GM10248 (cell line): ENCODE measurements at regions of chr6 and their contacts with region 1.

Region 1: GRCh38 chr6:41367700-41368099 is 32.3 kb downstream of the NCR2 start:
- DNase-seq: peak; percentile 32
- CTCF ChIP-seq: peak; percentile 50

Region 2: GRCh38 chr6:41072676-41073623 is 294.8 kb before region 1 on chr6 and contains the start of gene NFYA:
- CTCF ChIA-PET with region 1: no interaction called
- POLR2A ChIA-PET with region 1: no interaction called
- DNase-seq: peak; percentile 96
- CTCF ChIP-seq: peak; percentile 28

Region 3: GRCh38 chr6:41306187-41306854 is 61.4 kb before region 1 on chr6:
- CTCF ChIA-PET with region 1: interaction called, 24 read pairs
- POLR2A ChIA-PET with region 1: no interaction called
- DNase-seq: peak; percentile 45
- CTCF ChIP-seq: peak; percentile 53

Region 4: GRCh38 chr6:41334482-41335040 is 33.1 kb before region 1 on chr6:
- CTCF ChIA-PET with region 1: interaction called, 33 read pairs
- POLR2A ChIA-PET with region 1: no interaction called
- DNase-seq: no peak
- CTCF ChIP-seq: peak; percentile 25

Region 5: DNA sequence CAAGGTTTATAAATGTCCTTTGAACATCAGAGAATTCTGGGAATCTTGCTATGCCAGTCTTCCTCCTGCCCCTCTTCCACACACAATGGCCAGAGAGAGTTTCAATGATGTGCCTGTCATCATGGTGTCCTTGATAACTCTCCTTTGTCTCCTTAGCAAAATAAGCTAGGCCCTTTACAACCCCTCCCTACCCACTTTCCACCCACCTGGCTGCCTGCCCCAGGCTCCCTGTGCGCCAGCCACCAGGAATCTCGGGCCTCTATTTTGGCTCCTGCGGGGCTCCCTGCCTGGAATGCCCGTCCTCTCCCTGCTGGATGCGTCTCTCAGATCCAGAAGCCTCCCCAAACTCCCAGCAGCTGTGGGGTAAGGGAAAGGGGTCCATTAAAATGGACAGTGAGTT is 28.6 kb after region 1 on chr6:
- CTCF ChIA-PET with region 1: interaction called, 13 read pairs
- POLR2A ChIA-PET with region 1: no interaction called
- DNase-seq: no peak
- CTCF ChIP-seq: no peak

Region 6: DNA sequence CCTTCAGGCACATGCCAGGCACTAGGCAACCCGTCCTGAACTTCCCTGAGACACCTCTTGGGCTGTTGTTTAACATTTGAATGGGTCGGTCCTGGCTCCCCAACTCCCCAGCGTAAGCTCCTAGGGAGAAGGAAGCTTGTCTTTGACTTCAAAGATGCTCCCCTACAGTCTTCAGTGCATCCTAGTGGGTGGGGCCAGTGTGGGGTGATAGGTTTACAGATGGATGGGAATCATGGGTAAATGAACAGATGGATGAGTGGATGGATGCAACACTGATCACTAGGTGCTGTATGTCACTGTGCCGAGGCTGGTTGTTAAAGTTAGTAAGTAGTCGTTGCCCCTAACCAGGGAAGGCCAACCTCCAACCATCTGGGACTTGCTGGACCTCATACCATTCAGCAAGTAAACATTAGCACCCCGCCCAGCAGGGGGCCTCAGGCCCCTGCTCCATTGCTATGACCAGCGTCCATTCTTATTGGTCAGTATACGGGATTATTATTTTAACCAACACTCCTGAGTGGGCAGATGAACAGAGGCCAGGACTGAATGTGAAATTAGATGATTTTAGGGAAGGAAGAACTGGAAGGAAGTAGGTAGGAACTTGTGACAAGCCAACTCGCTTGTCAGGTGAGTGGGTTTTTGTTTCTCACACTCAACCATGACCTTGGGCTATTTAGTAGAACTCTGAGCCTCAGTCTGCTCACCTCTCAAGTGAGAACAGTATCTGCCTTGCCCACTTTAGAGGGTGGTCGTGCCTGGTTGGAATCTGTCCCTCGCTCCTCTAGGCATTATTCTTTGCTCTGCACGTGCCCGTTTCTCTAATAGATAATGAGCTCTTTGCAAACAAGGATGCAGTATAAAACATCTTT is 95.6 kb after region 1 on chr6:
- CTCF ChIA-PET with region 1: interaction called, 16 read pairs
- POLR2A ChIA-PET with region 1: no interaction called
- DNase-seq: peak; percentile 81
- CTCF ChIP-seq: peak; percentile 72

Region 7: DNA sequence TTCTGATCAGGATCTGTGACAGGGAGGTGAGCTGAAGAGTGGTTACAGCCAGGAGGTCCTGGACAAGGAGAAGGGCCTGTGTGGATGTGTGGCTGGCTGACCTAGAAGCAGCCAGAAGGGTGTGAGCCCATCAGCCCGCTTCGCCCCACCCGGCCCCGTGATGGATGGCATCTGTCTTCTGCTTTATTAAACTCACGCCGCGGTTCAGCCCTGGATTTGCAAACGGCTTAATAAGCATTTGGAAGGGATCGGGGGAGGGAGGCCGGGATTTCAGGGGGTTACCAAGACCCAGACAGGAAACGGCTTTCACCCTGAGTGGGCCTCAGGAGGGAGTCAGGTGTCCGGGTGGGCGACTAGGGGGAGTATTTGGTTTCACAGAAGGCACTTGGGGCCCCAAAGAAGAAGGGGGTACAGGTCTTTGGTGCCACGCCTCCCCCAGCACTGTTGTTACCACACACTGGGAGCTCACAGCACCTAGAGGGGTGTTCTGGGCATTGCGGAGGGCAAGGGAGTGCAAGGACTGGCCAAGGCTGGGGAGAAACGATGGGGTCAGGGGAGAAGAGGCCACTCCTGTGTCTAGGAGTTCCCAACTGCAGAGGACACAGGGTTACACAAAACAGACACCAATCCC is 124.7 kb after region 1 on chr6:
- CTCF ChIA-PET with region 1: no interaction called
- POLR2A ChIA-PET with region 1: no interaction called
- DNase-seq: no peak
- CTCF ChIP-seq: no peak

Region 8: DNA sequence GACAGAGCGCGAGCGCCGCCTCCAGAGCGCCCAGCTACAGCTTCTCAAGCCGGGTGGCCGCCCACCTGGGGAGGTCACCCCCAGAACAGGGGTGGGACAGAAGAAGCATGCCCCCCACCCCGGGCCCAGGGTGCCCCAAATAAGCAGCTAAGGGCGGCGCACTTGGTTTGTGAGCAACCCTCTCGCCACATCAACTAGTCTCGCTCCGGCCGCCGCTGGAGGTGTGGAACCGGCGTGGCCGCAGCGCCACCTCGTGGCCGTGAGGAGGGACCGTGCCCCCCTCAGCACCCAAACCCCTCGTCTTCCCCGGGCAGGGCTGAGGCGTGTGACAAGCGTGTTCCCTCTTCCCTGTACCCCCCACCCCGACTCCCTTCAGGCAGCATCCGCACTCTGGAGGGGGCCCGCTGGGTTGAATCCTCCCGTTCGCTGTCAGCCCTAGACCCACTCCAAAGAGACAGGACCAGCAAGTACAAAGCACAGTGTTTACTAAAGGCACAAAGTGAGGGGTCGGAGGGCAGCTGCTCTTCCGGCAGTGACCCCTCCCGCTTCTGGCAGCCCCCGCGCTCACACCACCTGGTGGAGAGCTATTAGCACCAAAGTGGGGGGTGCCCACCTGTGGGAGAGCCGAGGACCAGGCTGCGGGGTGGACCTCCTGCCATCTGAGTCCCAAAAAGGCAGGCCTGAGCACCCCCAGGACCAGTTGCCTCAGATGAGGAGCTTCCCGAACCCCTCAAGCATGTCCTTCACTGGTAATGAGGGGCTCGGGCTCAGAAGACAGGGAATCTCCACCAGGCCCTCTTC is 316.0 kb after region 1 on chr6:
- CTCF ChIA-PET with region 1: interaction called, 48 read pairs
- POLR2A ChIA-PET with region 1: no interaction called
- DNase-seq: peak; percentile 89
- CTCF ChIP-seq: peak; percentile 89